ENCODE measurements at regions of chr17 and their contacts with region 1.

Region 1: GRCh38 chr17:4366327-4367063 is at the start of gene UBE2G1:
- DNase-seq: peak; percentile 97 to 99 (median 98)
- H3K4me3 ChIP-seq: peak within 1 kb of the TSS; percentile 39 to 54
- H3K4me3 Mint-ChIP-seq: peak within 1 kb of the TSS; percentile 85 to 93 (median 90)
- H3K27ac ChIP-seq: peak within 1 kb of the TSS; percentile 85
- H3K27ac Mint-ChIP-seq: peak within 1 kb of the TSS; percentile 82 to 99 (median 99)
- H3K4me1 ChIP-seq: peaks cover 34% of the 10 kb centered on the region
- H3K4me1 Mint-ChIP-seq: peaks cover 20 to 41% (median 29%) of the 10 kb centered on the region in 4 donors
- H3K27me3 ChIP-seq: no peaks in the 10 kb centered on the region
- H3K27me3 Mint-ChIP-seq: no peaks in the 10 kb centered on the region
- total RNA-seq, gene UBE2G1: 56.9 to 61.6 TPM

Region 2: DNA sequence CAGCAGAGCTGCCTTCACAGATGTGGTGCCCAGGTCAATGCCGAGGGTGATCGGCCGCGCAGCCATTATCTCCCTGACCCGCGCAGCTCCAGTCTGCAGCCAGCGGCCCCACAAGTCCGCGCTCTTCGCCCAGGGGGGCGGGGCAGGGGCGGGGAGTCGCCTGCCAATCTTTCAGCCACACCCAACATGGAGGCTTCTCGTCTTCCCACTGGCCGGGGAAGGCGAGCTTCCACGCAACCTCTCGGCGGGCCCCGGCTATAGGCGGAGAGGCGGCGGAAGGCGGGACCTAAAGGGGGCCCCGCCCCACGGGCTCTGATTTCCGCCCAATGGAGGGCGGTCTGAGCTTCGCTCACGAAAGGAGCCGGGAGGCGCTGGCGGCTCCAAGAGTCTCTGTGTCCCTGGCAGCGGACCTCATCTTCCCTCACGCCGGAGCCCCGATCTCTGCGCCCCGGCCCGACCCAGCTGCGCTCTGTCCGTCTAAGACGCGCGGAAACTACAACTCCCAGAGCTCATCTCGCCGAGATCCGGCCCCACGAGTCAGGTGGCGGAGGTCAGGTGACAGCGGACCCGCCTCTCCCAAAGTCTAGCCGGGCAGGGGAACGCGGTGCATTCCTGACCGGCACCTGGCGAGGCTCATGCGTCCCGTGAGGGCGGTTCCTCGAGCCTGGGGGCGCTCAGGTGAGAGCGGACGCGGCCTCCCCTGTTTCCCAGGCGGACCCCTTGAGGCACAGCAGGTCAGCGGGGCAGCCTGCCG is 730.2 kb before region 1 on chr17 and contains the starts of genes CTNS and SHPK:
- CTCF ChIA-PET with region 1: no interaction called
- POLR2A ChIA-PET with region 1: no interaction called
- intact Hi-C with region 1: loop called (anchors 5 kb)
- DNase-seq: peak; percentile 93 to 97 (median 94)
- H3K4me3 ChIP-seq: peak within 1 kb of the TSS; percentile 73 to 99
- H3K4me3 Mint-ChIP-seq: peak within 1 kb of the TSS; percentile 96 to 100 (median 98)
- H3K27ac ChIP-seq: peak within 1 kb of the TSS; percentile 98
- H3K27ac Mint-ChIP-seq: peak within 1 kb of the TSS; percentile 97 to 100 (median 100)
- H3K4me1 ChIP-seq: peaks cover 11% of the 10 kb centered on the region
- H3K4me1 Mint-ChIP-seq: peaks cover 12 to 37% (median 24%) of the 10 kb centered on the region in 4 donors
- H3K27me3 ChIP-seq: no peaks in the 10 kb centered on the region
- H3K27me3 Mint-ChIP-seq: no peaks in the 10 kb centered on the region
- total RNA-seq, gene CTNS: 11.6 to 12.0 TPM
- total RNA-seq, gene SHPK: 10.7 to 11.6 TPM

Region 3: DNA sequence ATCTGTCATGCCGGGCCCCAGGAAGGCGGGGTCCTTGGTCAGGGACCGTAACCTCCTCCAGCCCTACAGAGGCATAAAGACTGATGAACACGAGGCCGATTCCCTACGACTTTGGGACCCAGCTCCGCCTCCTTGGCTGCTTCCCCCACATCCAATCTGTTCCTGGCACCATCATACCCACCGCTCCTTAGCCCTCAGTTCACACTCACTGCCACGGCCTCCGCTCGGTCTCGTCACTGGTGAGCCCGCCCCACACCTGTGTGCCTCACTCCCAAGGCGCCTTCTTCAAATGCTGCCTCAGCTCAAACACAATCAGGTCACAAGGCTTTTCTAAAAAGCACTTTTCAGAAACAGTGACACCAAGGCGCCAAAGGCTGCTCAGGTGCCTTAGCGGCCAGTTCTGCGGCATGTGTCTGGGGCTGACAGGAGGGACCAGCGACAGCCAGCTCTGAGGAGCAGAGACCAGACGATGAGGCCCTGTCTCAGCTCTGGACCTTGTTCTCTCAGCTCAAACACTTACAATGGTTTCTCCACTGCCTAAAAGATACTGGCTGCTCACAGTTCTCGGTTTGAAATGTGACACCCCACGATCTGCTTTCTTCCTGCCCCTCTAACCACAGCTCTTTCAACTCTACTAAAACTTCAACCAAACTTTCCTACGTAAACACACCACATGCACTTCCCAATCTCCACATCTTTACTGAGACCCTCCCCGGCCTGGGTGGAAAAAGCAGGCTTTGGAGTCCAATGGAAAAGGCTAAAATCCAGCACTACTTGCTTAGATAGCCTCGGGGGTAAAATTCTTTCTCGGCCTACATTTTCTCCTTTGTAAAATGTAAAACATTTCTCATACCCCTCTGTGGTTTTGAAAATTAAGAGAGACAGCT is 190.3 kb before region 1 on chr17:
- CTCF ChIA-PET with region 1: no interaction called
- POLR2A ChIA-PET with region 1: interaction called, 10 read pairs
- intact Hi-C with region 1: no loop called
- DNase-seq: peak; percentile 58 to 68 (median 63)
- H3K4me3 ChIP-seq: peak overlapping the region; percentile 1 to 47
- H3K4me3 Mint-ChIP-seq: peak overlapping the region; percentile 74 to 91 (median 82)
- H3K27ac ChIP-seq: peak overlapping the region; percentile 74
- H3K27ac Mint-ChIP-seq: peak overlapping the region; percentile 86 to 99 (median 98)
- H3K4me1 ChIP-seq: peaks cover 54% of the 10 kb centered on the region
- H3K4me1 Mint-ChIP-seq: peaks cover 41 to 64% (median 46%) of the 10 kb centered on the region in 4 donors
- H3K27me3 ChIP-seq: no peaks in the 10 kb centered on the region
- H3K27me3 Mint-ChIP-seq: no peaks in the 10 kb centered on the region

Region 4: GRCh38 chr17:4263282-4264215 is 102.9 kb before region 1 on chr17 and contains the start of gene ANKFY1:
- CTCF ChIA-PET with region 1: no interaction called
- POLR2A ChIA-PET with region 1: interaction called, 22 read pairs
- intact Hi-C with region 1: loop called (anchors 1 kb)
- DNase-seq: peak; percentile 96 to 99 (median 98)
- H3K4me3 ChIP-seq: peak within 1 kb of the TSS; percentile 74 to 86
- H3K4me3 Mint-ChIP-seq: peak within 1 kb of the TSS; percentile 91 to 98 (median 94)
- H3K27ac ChIP-seq: peak within 1 kb of the TSS; percentile 87
- H3K27ac Mint-ChIP-seq: peak within 1 kb of the TSS; percentile 91 to 97 (median 96)
- H3K4me1 ChIP-seq: peaks cover 37% of the 10 kb centered on the region
- H3K4me1 Mint-ChIP-seq: peaks cover 32 to 50% (median 39%) of the 10 kb centered on the region in 4 donors
- H3K27me3 ChIP-seq: no peaks in the 10 kb centered on the region
- H3K27me3 Mint-ChIP-seq: no peaks in the 10 kb centered on the region
- total RNA-seq, gene ANKFY1: 72.7 to 74.7 TPM

Region 5: DNA sequence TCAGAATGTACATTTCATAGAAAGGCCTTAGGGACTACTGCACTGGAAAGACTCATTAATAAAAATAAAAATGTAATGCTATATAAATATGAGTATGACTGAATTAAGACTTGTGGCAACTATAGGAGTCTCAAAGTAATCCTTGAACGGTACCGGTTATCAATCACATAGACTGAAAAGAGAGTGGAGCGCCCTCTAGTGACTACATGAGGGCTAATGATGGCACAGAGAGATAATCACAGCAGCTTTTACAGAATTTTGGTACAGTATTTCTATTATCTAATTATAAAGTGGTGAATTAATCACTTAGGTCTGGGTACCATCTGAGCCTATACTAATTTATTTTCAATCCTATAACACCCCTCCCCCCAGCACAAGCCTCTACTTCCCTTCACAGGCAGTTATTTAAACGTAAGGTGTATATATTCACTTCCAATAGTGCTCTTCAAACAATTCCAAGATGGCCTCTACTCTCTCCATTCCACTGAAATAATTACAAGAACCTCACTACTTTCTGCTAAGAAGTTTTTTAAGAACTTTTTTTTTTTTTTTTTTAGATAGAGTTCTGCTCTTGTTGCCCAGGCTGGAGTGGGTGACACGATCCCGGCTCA is 62.0 kb before region 1 on chr17:
- CTCF ChIA-PET with region 1: no interaction called
- POLR2A ChIA-PET with region 1: interaction called, 4 read pairs
- intact Hi-C with region 1: loop called (anchors 5 kb)
- DNase-seq: peak; percentile 45 to 65 (median 54)
- H3K4me3 ChIP-seq: no peak overlapping the region
- H3K4me3 Mint-ChIP-seq: no peak overlapping the region
- H3K27ac ChIP-seq: no peak overlapping the region
- H3K27ac Mint-ChIP-seq: no peak overlapping the region
- H3K4me1 ChIP-seq: peaks cover 12% of the 10 kb centered on the region
- H3K4me1 Mint-ChIP-seq: peaks cover 15 to 29% (median 22%) of the 10 kb centered on the region in 4 donors
- H3K27me3 ChIP-seq: no peaks in the 10 kb centered on the region
- H3K27me3 Mint-ChIP-seq: no peaks in the 10 kb centered on the region

Region 6: GRCh38 chr17:4412933-4413831 is 46.7 kb after region 1 on chr17:
- CTCF ChIA-PET with region 1: interaction called, 3 read pairs
- POLR2A ChIA-PET with region 1: no interaction called
- intact Hi-C with region 1: loop called (anchors 10 kb)
- DNase-seq: peak; percentile 79 to 88 (median 83)
- H3K4me3 ChIP-seq: peak overlapping the region in 1 of 2 donors; percentile 46
- H3K4me3 Mint-ChIP-seq: peak overlapping the region; percentile 52 to 79 (median 71)
- H3K27ac ChIP-seq: no peak overlapping the region
- H3K27ac Mint-ChIP-seq: peak overlapping the region in 4 of 7 donors; percentile 22 to 59 (median 57)
- H3K4me1 ChIP-seq: peaks cover 7% of the 10 kb centered on the region
- H3K4me1 Mint-ChIP-seq: peaks cover 4 to 6% (median 5%) of the 10 kb centered on the region in 4 donors
- H3K27me3 ChIP-seq: no peaks in the 10 kb centered on the region
- H3K27me3 Mint-ChIP-seq: no peaks in the 10 kb centered on the region

Region 7: DNA sequence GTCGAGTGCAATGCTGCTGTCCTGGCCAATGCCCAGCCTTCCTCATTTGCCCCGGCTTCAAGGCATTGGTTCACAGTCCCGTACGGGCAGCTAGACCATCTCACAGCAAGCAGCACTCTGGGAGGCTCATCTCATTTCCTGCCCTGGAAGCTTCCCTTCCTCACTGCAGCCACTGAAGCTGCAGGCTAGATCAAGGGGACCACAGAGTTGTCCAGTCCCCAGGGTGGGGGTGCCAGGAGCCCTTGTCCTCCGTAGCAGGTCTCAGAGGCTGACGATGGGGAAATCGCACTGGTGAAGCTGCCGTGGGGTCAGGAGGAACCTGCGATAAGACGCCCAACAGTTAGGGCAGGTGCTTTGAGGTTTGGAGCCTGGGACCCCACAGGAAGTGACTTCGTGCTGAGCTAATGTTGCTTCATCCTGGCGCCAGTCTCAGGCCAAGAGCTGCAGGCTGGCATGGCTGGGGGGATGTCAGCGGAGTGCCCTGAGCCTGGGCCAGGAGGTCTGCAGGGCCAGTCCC is 67.1 kb after region 1 on chr17 and contains the start of gene SPNS3:
- CTCF ChIA-PET with region 1: no interaction called
- POLR2A ChIA-PET with region 1: no interaction called
- intact Hi-C with region 1: no loop called
- DNase-seq: peak in 3 of 5 donors; percentile 13 to 18 (median 17)
- H3K4me3 ChIP-seq: peak within 1 kb of the TSS in 1 of 2 donors; percentile 32
- H3K4me3 Mint-ChIP-seq: peak within 1 kb of the TSS in 7 of 8 donors; percentile 5 to 71 (median 47)
- H3K27ac ChIP-seq: no peak within 1 kb of the TSS
- H3K27ac Mint-ChIP-seq: peak within 1 kb of the TSS in 3 of 7 donors; percentile 24 to 70 (median 52)
- H3K4me1 ChIP-seq: peaks cover 13% of the 10 kb centered on the region
- H3K4me1 Mint-ChIP-seq: peaks cover 12 to 31% (median 21%) of the 10 kb centered on the region in 4 donors
- H3K27me3 ChIP-seq: no peaks in the 10 kb centered on the region
- H3K27me3 Mint-ChIP-seq: no peaks in the 10 kb centered on the region
- total RNA-seq, gene SPNS3: 1.6 to 2.0 TPM

Measured in CD4-positive, alpha-beta memory T cell (primary cell).